ENCODE measurements at regions of chr11 and their contacts with region 1.

Region 1: DNA sequence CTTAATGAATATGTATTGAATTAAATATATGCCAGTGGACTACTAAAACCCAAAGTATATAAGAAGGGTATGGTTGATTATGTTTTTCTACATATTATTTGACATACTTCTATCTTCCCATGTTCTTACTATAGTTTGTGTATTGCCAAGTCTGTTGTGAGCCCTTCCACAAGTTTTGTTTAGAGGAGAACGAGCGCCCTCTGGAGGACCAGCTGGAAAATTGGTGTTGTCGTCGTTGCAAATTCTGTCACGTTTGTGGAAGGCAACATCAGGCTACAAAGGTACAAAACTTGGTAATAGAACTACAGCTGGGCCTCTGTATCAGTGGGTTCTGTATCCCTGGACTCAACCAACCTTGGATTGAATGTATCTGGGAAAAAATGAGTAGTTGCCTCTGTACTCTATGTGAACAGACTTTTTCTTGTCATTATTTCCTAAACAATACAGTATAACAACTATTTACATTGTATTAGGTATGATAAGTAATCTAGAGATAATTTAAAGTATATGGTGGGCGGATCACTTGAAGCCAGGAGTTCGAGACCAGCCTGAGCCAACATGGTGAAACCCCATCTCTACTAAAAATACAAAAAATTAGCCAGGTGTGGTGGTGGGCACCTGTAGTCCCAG is 38.7 kb upstream of the TTC36 start:
- DNase-seq: peak; percentile 65
- H3K4me3 ChIP-seq: no peak overlapping the region
- H3K27ac ChIP-seq: no peak overlapping the region
- H3K27me3 ChIP-seq: no peaks in the 10 kb centered on the region
- CTCF ChIP-seq: peak; percentile 90

Region 2: DNA sequence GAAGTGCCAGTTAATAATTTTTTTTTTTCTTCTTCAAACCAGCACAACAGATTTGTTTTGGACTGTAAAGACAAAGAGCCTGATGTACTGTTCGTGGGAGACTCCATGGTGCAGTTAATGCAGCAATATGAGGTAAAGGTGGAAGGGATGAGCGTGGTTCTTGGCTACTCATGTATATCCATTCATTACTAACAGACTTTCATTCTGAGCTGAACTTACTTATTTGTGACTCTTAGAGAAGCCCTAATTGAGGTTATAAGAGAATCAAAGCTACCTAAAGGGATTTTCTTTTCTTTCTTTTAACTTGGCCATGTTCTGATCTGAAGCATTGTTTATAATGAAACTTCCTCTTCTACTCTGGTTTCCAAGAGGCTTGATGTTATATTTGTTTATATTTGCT is 1328.7 kb before region 1 on chr11:
- CTCF ChIA-PET with region 1: interaction called, 11 read pairs
- POLR2A ChIA-PET with region 1: no interaction called
- DNase-seq: no peak
- H3K4me3 ChIP-seq: no peak overlapping the region
- H3K27ac ChIP-seq: no peak overlapping the region
- H3K27me3 ChIP-seq: no peaks in the 10 kb centered on the region
- CTCF ChIP-seq: no peak

Region 3: GRCh38 chr11:118401151-118401878 is 87.3 kb before region 1 on chr11 and contains the start of gene ATP5MG:
- CTCF ChIA-PET with region 1: interaction called, 16 read pairs
- POLR2A ChIA-PET with region 1: no interaction called
- DNase-seq: peak; percentile 72
- H3K4me3 ChIP-seq: peak within 1 kb of the TSS; percentile 92
- H3K27ac ChIP-seq: peak within 1 kb of the TSS; percentile 94
- H3K27me3 ChIP-seq: no peaks in the 10 kb centered on the region
- CTCF ChIP-seq: 0 out of 2 replicates have a peak, but pooled peaks have one; percentile 20
- polyA plus RNA-seq, gene ATP5MG: 346 and 423 TPM in 2 replicates

Region 4: DNA sequence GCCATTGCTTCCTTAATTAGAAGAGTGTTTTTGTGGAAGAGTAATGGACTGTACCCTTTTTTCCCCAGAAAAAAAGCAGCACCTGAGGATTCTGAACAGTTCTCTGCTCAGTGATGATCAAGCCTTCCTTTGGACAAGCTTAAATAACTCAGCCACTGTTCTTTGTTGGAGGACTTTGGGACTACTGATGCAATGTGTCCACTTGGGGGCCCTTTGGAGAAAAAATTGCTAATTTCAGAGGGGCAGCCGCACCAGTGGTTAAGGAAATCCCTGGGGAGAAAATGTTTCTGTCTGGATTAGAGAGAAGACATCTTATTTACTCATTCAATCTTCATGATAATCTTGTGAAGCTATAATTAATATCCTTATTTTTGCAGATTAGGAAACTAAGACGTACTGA is 57.6 kb before region 1 on chr11:
- CTCF ChIA-PET with region 1: no interaction called
- POLR2A ChIA-PET with region 1: no interaction called
- DNase-seq: no peak
- H3K4me3 ChIP-seq: no peak overlapping the region
- H3K27ac ChIP-seq: no peak overlapping the region
- H3K27me3 ChIP-seq: no peaks in the 10 kb centered on the region
- CTCF ChIP-seq: no peak

Region 5: DNA sequence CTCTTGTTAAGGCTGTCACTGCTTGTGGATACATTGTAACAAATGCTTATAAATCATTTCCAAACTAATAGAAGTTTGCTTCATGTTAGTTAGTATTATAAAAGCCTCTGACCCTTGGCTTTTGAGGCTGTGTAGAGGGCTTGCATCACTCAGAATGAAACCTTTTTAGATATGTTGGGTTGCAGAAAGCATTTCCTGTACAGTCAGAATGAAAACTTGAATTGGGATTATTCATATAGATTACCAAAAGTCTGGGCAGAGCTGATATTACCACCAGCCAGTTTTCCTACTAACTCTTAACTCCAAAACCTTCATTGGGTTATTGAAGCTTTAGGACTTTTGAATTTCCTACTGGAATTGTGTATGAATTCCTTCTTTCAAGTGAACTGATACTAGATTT is 40.3 kb before region 1 on chr11:
- CTCF ChIA-PET with region 1: interaction called, 14 read pairs
- POLR2A ChIA-PET with region 1: no interaction called
- DNase-seq: no peak
- H3K4me3 ChIP-seq: no peak overlapping the region
- H3K27ac ChIP-seq: no peak overlapping the region
- H3K27me3 ChIP-seq: no peaks in the 10 kb centered on the region
- CTCF ChIP-seq: no peak

Region 6: GRCh38 chr11:118519549-118519948 is 31.0 kb after region 1 on chr11:
- CTCF ChIA-PET with region 1: interaction called, 10 read pairs
- POLR2A ChIA-PET with region 1: no interaction called
- DNase-seq: no peak
- H3K4me3 ChIP-seq: no peak overlapping the region
- H3K27ac ChIP-seq: no peak overlapping the region
- H3K27me3 ChIP-seq: no peaks in the 10 kb centered on the region
- CTCF ChIP-seq: no peak

Region 7: DNA sequence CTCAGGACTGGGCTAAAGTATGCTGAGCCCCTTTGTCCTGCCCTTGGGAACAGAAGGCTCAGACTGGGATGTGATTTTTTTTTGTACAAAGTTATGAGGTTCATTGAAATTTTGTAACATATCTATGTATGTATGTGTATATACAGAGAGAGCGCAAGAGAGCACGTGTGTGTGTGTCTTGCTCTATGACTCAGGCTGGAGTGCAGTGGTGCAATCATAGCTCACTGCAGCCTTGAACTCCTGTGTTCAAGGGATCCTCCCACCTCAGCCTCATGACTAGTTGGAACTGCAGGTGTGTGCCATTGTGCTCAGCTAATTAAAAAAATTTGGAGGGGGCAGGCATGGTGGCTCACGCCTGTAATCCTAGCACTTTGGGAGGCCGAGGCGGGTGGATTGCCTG is 48.1 kb after region 1 on chr11:
- CTCF ChIA-PET with region 1: no interaction called
- POLR2A ChIA-PET with region 1: no interaction called
- DNase-seq: no peak
- H3K4me3 ChIP-seq: no peak overlapping the region
- H3K27ac ChIP-seq: no peak overlapping the region
- H3K27me3 ChIP-seq: no peaks in the 10 kb centered on the region
- CTCF ChIP-seq: no peak